ENCODE measurements at regions of chr1 and their contacts with region 1.

Region 1: DNA sequence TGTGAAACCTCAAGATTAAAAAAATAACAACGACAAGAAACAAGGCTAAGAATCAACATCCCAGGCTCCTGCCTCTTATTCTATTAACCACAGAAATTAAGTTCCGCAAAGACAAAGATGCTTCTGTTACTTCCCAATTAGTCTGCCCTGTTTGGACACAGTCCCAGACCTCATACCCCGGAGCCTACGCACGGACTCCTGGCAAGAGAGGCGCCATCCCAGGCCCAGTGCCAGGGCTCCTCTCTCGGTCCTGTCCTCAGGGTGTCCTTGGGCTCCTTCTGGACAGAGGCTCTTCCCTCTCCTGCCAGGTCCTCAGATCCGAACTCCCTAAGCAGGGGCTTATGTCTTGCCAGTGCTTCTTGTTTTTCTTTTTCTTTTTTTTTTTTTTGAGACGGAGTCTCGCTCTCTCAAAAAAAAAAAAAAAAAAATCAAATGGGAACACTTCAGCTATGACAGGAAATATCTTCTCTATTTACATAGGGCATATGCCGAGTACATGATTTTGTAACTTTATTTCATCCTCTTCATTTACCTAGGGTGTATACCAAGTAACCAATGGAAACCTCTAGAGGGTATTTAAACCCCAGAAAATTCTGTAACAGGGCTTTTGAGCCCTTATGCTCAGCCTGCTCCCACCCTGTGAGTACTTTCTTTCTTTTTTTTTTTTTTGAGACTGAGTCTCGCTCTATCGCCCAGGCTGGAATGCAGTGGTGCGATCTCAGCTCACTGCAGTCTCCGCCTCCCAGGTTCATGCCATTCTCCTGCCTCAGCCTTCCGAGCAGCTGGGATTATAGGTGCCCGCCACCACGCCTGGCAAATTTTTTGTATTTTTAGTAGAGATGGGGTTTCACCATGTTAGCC is 11.7 kb upstream of the ENO1 start:
- DNase-seq: peak; percentile 59
- H3K4me3 ChIP-seq: 0 out of 2 replicates have a peak overlapping the region, but pooled peaks have one; percentile 6
- CTCF ChIP-seq: no peak

Region 2: DNA sequence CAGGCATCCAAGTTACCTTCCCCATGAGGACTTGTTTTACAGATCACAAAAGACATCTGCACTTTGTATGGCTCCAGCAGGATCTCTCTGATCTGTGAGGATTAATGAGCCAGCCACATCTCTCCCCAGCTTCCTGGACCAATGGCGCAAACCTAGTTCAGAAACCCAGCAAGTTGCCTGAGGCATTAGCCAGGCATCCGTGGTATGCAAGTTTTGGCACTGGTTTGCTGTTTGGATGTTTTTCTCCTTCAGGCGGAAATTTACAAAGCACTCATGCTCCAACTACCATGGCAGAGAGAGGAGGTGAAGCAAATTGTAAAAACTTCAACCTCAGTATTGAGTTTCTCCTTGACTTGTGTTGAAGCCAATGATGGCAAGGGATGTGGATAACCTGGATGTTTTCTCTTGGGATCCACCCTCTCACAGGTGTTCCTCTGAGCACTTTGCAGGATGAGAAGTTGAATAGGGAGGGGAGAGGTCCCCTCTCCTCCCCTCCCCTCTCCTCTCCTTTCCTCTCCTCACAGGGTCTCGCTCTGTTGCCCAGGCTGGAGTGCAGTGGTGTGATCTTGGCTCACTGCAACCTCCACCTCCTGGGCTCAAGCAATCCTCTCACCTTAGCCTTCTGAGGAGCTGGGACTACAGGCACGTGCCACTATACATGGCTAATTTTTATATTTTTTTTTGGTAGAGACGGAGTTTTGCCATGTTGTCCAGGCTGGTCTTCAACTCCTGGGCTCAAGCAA is 13.9 kb after region 1 on chr1:
- CTCF ChIA-PET with region 1: interaction called, 13 read pairs
- POLR2A ChIA-PET with region 1: no interaction called
- DNase-seq: peak; percentile 92
- H3K4me3 ChIP-seq: no peak overlapping the region
- CTCF ChIP-seq: no peak